ENCODE measurements at regions of chr4 and their contacts with region 1.

Region 1: DNA sequence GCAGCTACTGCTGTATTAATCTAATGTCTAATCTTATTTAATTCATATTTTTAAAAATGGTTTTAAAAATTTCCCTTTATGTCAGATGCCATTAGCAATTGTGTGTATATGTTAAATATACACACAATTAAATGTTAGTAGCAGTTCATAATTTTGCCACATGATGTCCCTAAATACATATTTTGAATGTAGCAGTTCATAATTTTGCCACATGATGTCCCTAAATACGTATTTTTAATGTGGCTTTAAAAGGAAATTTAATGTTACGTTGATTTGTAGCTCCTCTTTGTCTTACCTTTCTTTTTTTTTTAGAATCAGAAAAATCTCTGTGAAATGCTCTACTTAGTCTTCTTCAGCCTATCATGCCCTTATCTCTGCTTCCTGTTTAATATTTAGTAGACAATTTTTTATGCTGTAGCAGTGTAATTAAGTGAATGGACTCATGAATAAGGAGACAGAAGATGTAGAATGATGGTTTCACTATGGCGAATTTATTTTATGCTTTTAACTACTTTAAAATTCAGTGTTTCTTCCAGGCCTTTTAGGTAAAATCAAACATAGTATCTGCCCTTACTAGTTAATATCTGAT is 26.1 kb downstream of the RBM46 start:
- ATAC-seq: peak in 1 of 8 experiments; percentile 42
- H3K4me3 ChIP-seq: no peak overlapping the region
- H3K27ac ChIP-seq: no peak overlapping the region
- H3K4me1 ChIP-seq: no peaks in the 10 kb centered on the region

Region 2: GRCh38 chr4:155179216-155179615 is 372.1 kb after region 1 on chr4:
- in situ Hi-C with region 1: no loop called
- ATAC-seq: peak in 1 of 8 experiments; percentile 92
- H3K4me3 ChIP-seq: no peak overlapping the region
- H3K27ac ChIP-seq: no peak overlapping the region
- H3K4me1 ChIP-seq: no peaks in the 10 kb centered on the region

Region 3: DNA sequence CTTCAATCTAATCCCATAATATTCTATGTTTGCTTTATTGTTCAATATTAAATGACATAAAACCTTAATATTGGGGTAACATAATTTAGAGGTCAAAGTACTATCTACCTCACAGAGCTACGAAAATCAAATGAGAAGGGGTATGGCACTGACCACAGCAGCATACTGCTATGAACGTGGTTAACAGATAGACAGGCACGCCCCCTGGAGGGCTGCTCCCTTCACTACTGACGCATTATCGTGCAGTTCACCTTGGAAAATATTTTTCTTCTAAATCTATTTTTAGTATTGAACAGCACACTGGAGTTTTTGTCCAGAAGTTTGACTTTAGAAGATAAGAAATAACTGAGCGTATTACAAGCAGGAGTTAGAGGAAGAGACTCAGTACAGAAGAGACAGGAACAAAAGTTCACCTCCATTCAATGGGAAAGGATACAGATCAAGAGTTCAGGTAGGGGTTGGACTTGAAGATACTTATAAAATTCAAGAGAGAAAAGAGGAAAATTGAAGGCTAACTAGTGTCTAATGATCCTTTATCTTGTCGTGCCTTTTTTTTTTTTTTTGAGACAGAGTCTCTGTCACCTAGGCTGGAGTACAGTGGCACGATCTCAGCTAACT is 546.9 kb after region 1 on chr4:
- in situ Hi-C with region 1: loop called in 1 of 9 experiments (anchors 25 kb)
- ATAC-seq: peak; percentile 56 to 95 (median 81)
- H3K4me3 ChIP-seq: no peak overlapping the region
- H3K27ac ChIP-seq: no peak overlapping the region
- H3K4me1 ChIP-seq: no peaks in the 10 kb centered on the region